ENCODE measurements at regions of chr18 and their contacts with region 1.

Region 1: GRCh38 chr18:3230401-3231334 is 10.9 kb upstream of the MYOM1 start:
- DNase-seq: peak; percentile 84 to 90 (median 85)
- ATAC-seq: peak; percentile 68 to 92 (median 84)
- H3K4me3 ChIP-seq: peak overlapping the region in 2 of 3 donors; percentile 21 to 26
- H3K27ac ChIP-seq: peak overlapping the region; percentile 33 to 88 (median 74)
- H3K4me1 ChIP-seq: peaks cover 0 to 37% (median 17%) of the 10 kb centered on the region in 4 donors
- H3K27me3 ChIP-seq: no peaks in the 10 kb centered on the region
- CTCF ChIP-seq: no peak
- POLR2A ChIP-seq: peak; percentile 82

Region 2: GRCh38 chr18:3151399-3152264 is 79.0 kb before region 1 on chr18:
- intact Hi-C with region 1: loop called in 1 of 2 experiments (anchors 10 kb)
- DNase-seq: no peak
- ATAC-seq: peak; percentile 20 to 56 (median 30)
- H3K4me3 ChIP-seq: no peak overlapping the region
- H3K27ac ChIP-seq: peak overlapping the region in 2 of 3 donors; percentile 15 to 92
- H3K4me1 ChIP-seq: peaks cover 0 to 29% (median 17%) of the 10 kb centered on the region in 4 donors
- H3K27me3 ChIP-seq: no peaks in the 10 kb centered on the region
- CTCF ChIP-seq: peak; percentile 62 to 80 (median 78)
- POLR2A ChIP-seq: no peak

Measured in right lobe of liver (tissue), 6 donors.